ENCODE measurements at regions of chr13 and their contacts with region 1.

Region 1: DNA sequence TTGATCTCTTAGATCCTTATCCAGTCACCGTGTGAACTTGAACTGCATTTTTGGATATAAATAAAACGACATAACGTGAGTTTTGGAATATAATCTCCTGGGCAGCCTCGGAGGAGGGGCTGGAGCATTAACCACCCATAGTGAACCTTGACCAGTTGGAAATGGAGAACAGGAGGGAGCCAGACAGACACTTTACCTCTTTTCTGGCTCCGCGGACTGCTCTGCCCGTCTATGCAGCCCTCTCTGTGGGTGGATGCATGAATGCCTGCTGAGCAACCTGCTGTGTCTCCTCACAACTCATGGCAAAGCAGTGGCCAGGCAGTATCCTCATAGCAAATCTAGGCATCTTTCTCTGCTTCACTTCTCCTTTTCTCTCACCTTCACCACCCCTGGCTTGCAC is 10.5 kb upstream of the COG3 start:
- DNase-seq: no peak
- H3K4me3 ChIP-seq: no peak overlapping the region
- H3K27ac ChIP-seq: no peak overlapping the region
- H3K27me3 ChIP-seq: no peaks in the 10 kb centered on the region
- CTCF ChIP-seq: no peak

Region 2: DNA sequence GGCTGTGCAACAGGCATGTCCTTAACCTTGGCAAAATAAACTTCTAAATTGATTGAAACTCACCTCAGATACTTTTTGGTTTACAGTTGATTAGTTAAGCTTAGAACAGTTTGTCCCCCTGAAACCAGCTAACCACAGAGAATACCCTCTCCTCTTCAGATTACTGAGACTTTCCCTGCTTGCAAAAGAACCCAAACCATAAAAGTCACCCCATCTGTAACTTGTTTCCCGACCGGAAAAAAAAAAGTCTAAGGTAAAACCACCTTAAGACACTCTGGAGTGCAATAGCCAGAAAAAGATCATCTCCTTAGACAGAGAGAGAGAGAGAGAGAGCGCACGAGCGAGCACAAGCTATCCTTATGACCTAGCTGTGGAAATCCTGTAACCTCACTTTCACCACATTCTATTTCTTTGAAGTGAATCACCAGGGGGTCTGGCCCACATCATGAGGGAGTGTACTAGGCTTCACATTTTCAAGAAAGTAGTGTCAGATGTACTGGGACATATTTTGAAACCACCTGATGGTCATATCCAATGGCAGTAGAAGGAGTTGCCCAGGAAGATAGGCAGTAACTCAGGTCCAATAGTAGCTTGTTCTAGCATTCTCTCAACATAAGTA is 345.0 kb before region 1 on chr13:
- intact Hi-C with region 1: no loop called
- DNase-seq: no peak
- H3K4me3 ChIP-seq: no peak overlapping the region
- H3K27ac ChIP-seq: no peak overlapping the region
- H3K27me3 ChIP-seq: no peaks in the 10 kb centered on the region
- CTCF ChIP-seq: no peak

Region 3: GRCh38 chr13:45417790-45418534 is 36.2 kb before region 1 on chr13 and contains the start of gene SLC25A30:
- intact Hi-C with region 1: loop called in 1 of 2 experiments (anchors 5 kb)
- DNase-seq: peak; percentile 72 to 95 (median 90)
- H3K4me3 ChIP-seq: peak within 1 kb of the TSS; percentile 65 to 94 (median 81)
- H3K27ac ChIP-seq: peak within 1 kb of the TSS in 57 of 59 donors; percentile 23 to 93 (median 76)
- H3K27me3 ChIP-seq: no peaks in the 10 kb centered on the region
- CTCF ChIP-seq: peak in 1 of 56 donors; percentile 4
- total RNA-seq, gene SLC25A30: 7.9 to 24.9 (median 13.0) TPM

Region 4: DNA sequence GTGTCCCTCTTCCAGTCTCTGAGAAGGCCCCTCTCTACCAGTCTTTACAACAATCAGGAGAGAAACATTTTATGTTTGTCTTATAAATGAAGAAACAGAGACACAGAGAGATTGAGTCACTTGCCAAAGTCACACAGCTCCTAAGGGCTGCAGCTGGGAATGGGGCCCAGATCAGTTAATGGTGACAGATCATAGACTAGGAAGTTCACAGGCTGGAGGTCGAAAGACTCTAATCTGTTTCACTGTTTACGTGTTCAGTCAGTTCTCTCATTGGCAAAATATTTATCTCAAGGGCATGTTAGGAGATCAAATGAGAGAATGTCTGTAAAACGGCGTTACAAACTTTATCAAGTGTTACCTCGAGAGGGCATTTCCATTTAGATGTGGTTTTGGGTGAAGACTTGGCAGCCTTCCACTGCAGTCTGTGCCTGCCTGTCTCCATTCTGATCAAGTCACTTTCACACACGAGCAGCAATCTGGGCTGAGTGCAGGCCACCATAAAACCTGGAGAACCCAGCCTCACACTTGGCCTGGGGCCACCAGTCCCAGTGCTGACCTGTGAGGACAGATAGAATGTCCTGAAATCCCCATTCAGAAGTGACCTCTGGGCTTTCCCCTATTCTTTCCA is 332.2 kb after region 1 on chr13:
- intact Hi-C with region 1: no loop called
- DNase-seq: no peak
- H3K4me3 ChIP-seq: no peak overlapping the region
- H3K27ac ChIP-seq: no peak overlapping the region
- H3K27me3 ChIP-seq: peaks cover 0 to 2% (median 0%) of the 10 kb centered on the region in 45 donors
- CTCF ChIP-seq: no peak